GM12878 (cell line): ENCODE measurements at regions of chr10 and their contacts with region 1.

Region 1: DNA sequence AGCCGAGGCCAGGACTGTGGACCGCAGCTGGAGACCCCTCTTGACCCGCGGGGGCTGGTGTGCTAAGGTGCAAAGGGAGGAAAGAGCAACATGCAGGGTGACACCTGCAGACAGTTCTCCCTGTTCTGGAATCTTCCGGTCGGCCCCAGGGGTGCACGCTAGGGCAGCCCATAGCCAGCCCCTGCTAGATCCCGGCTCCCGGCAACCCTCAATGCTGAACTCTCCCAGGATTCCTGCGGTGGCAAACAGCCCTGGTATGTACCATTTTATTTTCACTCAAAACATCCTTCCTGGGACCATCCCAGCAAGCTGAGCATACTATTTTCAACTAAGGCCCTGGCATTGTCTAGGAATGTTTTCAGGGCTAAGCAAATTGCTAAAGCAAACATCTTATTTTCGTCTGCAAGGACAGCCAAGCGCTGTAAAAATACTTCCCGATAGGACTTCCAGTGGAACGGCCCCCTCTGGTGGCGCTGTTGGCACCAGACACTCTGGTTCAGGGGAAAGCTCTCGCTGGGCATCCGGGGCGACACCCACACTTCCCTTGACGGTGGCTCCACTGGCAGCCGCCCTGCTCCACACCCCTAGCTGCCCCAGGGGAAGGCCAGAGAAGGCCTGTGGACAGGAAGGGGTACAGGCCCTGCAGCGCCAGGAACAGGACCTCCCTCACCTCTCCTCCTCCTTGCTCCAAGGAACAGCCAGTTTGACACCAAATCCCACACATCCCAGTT is 99.4 kb downstream of the CTBP2 start:
- DNase-seq: no peak
- ATAC-seq: peak; percentile 13; the same call in 1 of the 3 replicates
- H3K4me3 ChIP-seq: no peak overlapping the region
- H3K27ac ChIP-seq: no peak overlapping the region
- H3K4me1 ChIP-seq: peaks cover 42% of the 10 kb centered on the region
- H3K27me3 ChIP-seq: peaks cover 0 to 5% of the 10 kb centered on the region in 2 experiments; a peak in 1 of 4 replicates
- CTCF ChIP-seq: peak; percentile 57 to 66 (median 61); a peak in 5 of 6 replicates
- EP300 ChIP-seq: no peak
- POLR2A ChIP-seq: no peak
- RAD21 ChIP-seq: peak; percentile 47

Region 2: DNA sequence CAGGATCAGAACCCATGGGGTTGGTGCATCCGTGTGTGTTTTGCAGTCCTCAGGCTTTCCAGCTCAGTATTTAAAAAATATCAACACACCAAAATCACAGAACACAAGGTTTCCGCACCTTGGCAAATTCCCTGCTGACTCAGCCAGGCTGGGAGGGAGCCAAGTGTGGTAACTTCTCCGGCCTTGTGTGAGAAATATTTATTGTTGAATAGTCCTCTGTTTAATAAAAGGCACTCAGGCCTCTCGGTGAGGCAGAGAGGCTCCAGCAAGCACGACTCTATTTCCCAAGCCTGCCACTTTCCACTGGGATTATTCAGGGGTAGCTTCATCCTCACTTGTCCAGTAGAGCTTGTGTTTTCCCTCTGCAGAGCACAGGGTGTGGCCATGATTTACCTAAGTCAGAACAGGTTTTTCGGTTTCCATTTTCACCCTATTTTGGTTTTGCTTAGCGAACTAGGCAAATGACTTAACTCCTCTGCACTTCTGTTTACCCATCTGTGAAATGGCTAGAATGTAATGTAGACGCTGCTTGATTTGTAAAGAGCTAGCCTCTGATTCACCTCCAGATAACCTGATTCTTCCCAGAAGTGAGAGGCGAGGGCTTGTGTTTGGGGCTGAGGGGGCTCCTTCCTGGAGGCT is 954.6 kb before region 1 on chr10:
- CTCF ChIA-PET with region 1: no interaction called
- POLR2A ChIA-PET with region 1: no interaction called
- RAD21 ChIA-PET with region 1: no interaction called
- SMC1A ChIA-PET with region 1: no interaction called
- in situ Hi-C with region 1: loop called (anchors 10 kb)
- intact Hi-C with region 1: no loop called
- DNase-seq: peak; percentile 57
- ATAC-seq: peak; percentile 97
- H3K4me3 ChIP-seq: peak overlapping the region; percentile 34; the same call in 1 of the 2 replicates
- H3K27ac ChIP-seq: peak overlapping the region; percentile 33
- H3K4me1 ChIP-seq: peaks cover 25% of the 10 kb centered on the region
- H3K27me3 ChIP-seq: peaks cover 0 to 5% of the 10 kb centered on the region in 2 experiments; a peak in 3 of 4 replicates
- CTCF ChIP-seq: no peak
- EP300 ChIP-seq: no peak
- POLR2A ChIP-seq: no peak
- RAD21 ChIP-seq: no peak

Region 3: DNA sequence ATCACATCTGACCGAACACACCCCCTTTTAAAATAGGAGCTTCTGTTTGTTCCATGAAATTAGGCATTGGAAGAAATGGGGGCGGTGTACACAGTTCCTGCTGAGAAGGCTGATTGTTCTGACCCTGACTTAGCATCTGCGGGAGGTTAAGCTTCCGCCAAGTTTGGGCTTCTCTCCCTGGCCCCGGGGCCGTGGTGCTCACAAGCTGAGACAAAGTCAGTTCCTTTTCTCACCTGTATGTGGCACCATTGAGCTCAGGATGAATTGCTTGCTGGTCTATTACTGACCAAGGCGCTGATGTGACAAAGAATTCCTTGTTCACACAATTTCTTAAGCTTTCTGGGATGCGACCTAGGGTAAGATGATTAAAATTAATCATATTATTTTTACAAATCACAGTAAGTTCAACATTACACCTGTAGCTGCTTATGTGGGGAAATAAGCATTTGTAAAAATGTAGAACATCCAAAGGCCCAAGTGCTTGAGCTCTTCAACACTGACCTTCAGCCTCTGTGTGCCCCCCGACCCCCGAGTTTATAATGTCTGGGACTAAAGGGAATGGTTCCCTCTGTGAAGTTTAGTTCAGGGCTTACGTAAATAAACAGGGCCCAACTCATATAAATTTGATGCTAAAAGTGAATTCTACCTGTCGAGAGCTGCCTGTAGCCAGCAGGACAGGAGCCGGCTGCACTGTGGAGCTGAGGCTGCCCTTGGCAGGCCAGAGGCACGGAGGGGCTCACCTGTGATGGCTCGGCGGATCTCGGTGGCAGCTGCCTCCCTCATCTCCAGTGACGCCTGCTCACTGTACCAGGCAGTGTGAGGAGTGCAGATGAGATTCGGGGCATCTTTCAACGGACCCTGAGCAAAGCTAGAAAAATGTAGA is 68.3 kb before region 1 on chr10:
- CTCF ChIA-PET with region 1: interaction called, 10 read pairs
- POLR2A ChIA-PET with region 1: no interaction called
- RAD21 ChIA-PET with region 1: no interaction called
- SMC1A ChIA-PET with region 1: interaction called, 6 read pairs
- in situ Hi-C with region 1: no loop called
- intact Hi-C with region 1: no loop called
- DNase-seq: no peak
- ATAC-seq: peak; percentile 85
- H3K4me3 ChIP-seq: no peak overlapping the region
- H3K27ac ChIP-seq: no peak overlapping the region
- H3K4me1 ChIP-seq: peaks cover 9% of the 10 kb centered on the region
- H3K27me3 ChIP-seq: no peaks in the 10 kb centered on the region
- CTCF ChIP-seq: peak; percentile 29 to 52 (median 49)
- EP300 ChIP-seq: no peak
- POLR2A ChIP-seq: no peak
- RAD21 ChIP-seq: peak; percentile 33

Region 4: DNA sequence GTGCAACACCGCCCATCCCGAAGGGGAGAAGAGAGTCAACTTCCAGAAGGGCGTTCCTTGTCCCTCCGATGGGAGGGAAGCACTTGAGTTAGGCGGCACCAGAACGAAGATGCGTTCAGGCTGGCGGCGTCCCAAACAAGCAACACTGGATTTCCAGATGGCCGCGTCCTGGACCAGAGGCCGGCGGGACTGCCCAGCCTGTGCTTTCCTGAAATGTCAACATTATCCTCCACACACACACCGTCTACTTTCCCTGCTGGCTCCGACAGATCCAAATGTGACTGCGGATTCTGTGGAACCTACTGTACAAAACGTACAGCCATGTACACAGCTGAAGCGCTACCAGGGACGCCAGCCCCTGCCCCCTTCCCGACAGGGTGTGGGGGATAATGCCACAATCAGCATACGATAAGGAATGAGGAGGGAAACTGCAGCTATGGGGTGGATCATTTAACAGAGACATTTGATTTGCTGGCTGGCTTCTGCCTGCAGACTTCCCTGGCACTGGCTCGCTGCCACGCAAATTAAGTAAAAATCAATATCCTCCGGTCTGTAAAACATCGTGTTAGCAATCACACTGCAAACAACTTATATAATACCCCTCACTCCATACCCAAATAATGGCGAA is 37.0 kb before region 1 on chr10:
- CTCF ChIA-PET with region 1: no interaction called
- POLR2A ChIA-PET with region 1: no interaction called
- RAD21 ChIA-PET with region 1: no interaction called
- SMC1A ChIA-PET with region 1: no interaction called
- in situ Hi-C with region 1: no loop called
- intact Hi-C with region 1: no loop called
- DNase-seq: no peak
- ATAC-seq: no peak
- H3K4me3 ChIP-seq: no peak overlapping the region
- H3K27ac ChIP-seq: no peak overlapping the region
- H3K4me1 ChIP-seq: no peaks in the 10 kb centered on the region
- H3K27me3 ChIP-seq: peaks cover under 1 to 3% of the 10 kb centered on the region in 2 experiments; a peak in 3 of 4 replicates
- CTCF ChIP-seq: no peak
- EP300 ChIP-seq: no peak
- POLR2A ChIP-seq: no peak
- RAD21 ChIP-seq: no peak

Region 5: DNA sequence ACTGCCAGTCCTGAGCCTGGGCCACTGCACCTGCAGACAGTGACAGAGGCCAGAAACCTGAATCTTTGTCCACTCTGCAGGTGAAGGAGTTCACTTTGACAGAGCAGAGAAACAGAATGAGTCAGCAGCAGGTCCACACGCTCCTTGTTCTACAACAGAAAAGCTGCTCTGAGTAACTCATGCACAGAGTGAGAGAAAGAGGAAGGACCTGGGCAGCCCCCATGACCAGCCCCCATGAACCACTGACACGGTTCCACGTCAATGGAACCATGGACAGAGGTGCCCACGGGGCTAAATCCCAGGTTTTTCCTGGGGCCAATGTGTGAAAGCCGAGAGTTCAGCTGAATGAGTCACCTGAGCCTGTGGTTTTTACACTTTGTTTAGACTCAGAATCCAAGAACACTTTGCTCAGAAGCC is 140.1 kb after region 1 on chr10:
- CTCF ChIA-PET with region 1: no interaction called
- POLR2A ChIA-PET with region 1: no interaction called
- RAD21 ChIA-PET with region 1: no interaction called
- SMC1A ChIA-PET with region 1: no interaction called
- in situ Hi-C with region 1: no loop called
- intact Hi-C with region 1: loop called (anchors 5 kb)
- DNase-seq: peak; percentile 17
- ATAC-seq: peak; percentile 88
- H3K4me3 ChIP-seq: no peak overlapping the region
- H3K27ac ChIP-seq: no peak overlapping the region
- H3K4me1 ChIP-seq: peaks cover 20% of the 10 kb centered on the region
- H3K27me3 ChIP-seq: peaks cover 0 to 2% of the 10 kb centered on the region in 2 experiments; a peak in 1 of 4 replicates
- CTCF ChIP-seq: no peak
- EP300 ChIP-seq: no peak
- POLR2A ChIP-seq: no peak
- RAD21 ChIP-seq: no peak